Dendritic cell treated with granulocyte-macrophage colony-stimulating factor and Interleukin-4, amounts not matched to agents 40 ng/mL and 50 ng/mL, for 4 days (primary cell): ENCODE measurements at regions of chr19 and their contacts with region 1.

Region 1: DNA sequence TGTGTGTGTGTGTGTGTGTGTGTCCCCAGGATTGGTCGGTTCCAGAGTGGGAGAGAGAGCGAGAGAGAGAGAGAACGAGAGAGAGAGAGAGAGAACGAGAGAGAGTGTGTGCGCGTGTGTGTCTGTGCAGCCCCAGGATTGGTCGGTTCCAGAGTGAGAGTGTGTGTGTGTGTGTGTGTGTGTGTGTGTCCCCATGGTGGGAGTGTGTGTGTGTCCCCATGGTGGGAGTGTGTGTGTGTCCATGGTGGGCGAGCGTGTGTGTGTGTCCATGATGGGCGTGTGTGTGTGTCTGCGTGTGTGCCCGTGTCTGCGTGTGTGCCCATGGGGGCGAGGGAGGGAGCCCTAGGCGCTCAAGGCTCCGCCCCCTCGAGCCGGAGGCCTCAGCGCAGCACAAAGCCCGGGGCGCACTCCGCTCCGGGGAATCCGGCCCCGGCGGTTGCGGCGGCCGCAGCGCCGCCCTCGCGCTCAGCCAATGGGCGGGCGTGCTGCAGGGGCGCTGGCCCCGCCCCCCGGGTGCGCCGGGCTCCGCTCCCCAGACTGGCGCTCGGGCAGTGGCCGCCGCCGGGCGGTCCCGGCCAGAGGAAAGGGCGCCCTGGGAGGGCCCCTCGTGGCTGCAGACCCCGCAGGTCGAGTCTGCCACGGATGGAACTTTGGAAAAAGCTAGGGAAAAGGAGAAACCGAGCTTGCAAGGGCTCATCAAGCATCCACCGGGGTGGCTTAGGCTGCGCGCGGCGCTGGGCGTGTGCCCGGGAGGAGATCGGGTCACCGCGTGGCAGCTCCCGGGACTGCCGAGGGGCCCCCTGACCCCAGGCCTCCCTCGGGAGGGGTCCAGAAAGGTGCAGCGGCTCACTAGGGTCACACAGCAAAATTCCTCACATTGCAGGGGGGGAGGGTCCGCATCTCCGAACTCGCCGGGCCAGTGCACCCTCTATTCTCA is 96.2 kb downstream of the INSR start:
- H3K4me3 Mint-ChIP-seq: peak overlapping the region; percentile 84
- H3K27ac Mint-ChIP-seq: peak overlapping the region; percentile 86
- H3K4me1 Mint-ChIP-seq: peaks cover 29% of the 10 kb centered on the region
- H3K27me3 Mint-ChIP-seq: peaks cover 3% of the 10 kb centered on the region

Region 2: DNA sequence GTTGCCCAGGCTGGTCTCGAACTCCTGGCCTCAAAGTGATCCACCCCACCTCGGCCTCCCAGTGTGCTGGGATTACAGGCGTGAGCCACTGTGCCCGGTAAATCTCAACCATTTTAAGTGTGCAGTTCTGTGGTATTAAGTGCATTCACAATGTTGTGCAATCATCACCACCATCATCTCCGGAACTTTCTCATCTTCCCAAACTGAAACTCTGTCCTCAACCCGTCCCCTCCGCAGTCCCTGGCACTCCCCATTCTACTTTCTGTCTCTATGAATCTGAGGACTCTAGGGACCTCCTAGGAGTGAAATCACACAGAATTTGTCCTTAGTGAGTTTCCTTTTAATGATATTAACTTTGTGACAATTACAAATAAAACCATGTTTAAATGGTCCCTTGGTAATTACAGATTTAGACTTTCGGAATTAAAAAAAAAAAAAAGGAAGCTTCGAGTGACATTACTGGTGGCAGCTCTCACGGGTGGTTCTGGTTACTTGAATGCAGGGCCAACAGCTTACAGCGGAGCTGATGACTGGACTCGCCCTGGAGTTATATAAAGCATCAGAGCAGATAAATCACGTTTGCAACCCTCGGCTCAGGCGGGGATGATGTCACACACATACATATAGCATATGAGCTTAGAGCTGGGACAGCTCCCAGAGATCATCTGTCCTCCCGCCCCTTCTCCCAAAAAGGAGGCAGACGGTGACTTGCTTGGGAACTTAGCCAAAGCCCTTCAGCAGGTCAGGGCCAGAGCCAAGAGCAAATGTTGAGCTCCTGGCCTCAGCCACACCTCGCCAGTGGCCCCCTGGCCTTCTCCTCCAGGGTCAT is 38.7 kb before region 1 on chr19:
- intact Hi-C with region 1: no loop called
- H3K4me3 Mint-ChIP-seq: peak overlapping the region; percentile 51
- H3K27ac Mint-ChIP-seq: peak overlapping the region; percentile 74
- H3K4me1 Mint-ChIP-seq: peaks cover 11% of the 10 kb centered on the region
- H3K27me3 Mint-ChIP-seq: no peaks in the 10 kb centered on the region

Region 3: GRCh38 chr19:7250951-7251893 is 53.2 kb after region 1 on chr19:
- intact Hi-C with region 1: no loop called
- H3K4me3 Mint-ChIP-seq: no peak overlapping the region
- H3K27ac Mint-ChIP-seq: no peak overlapping the region
- H3K4me1 Mint-ChIP-seq: peaks cover 41% of the 10 kb centered on the region
- H3K27me3 Mint-ChIP-seq: no peaks in the 10 kb centered on the region

Region 4: DNA sequence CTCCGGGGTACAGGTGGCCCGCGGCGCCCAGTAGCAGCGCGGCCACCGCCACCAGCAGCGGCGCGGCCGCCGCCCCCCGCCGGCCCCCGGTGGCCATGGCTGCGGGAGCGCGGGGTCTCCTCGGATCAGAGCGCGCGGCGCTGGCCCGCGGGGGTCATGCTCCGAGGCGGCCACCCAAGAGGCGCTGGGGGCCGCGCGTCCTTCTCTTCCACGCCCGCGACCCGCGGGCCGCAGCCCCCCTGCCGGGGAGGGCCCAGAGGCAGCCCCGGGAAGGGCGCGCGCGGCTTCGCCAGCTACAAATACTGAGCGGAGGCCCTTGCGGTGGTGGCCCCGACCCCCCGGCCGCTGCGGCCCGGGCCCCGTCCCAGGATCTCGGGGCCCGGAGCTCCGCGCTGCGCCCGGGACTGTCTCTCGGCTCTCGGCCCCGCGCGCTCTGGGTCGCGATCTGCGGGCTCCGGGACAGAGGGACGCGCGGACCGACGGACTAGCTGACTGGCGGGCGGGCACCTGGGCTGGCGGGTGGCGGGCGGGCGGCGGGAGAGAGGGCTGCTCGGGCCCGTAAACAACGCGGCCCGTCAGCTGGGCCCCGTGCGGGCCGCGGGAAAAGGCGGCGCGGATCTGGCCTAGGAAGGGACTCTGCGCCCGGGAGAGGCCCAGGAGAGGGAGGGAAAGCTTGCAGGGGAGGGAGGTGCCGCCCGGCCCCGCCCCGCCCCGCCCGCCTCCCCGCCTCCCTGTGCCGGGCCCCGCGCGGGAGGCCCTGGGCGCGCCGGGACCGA is 96.0 kb after region 1 on chr19 and contains the start of gene INSR:
- intact Hi-C with region 1: loop called (anchors 1 kb)
- H3K4me3 Mint-ChIP-seq: peak within 1 kb of the TSS; percentile 81
- H3K27ac Mint-ChIP-seq: peak within 1 kb of the TSS; percentile 77
- H3K4me1 Mint-ChIP-seq: peaks cover 33% of the 10 kb centered on the region
- H3K27me3 Mint-ChIP-seq: peaks cover 5% of the 10 kb centered on the region